ENCODE measurements at regions of chr10 and their contacts with region 1.

Region 1: GRCh38 chr10:6593241-6593671 is 13.2 kb upstream of the PRKCQ start:
- DNase-seq: no peak
- H3K4me3 ChIP-seq: no peak overlapping the region
- H3K27ac ChIP-seq: no peak overlapping the region
- H3K4me1 ChIP-seq: no peaks in the 10 kb centered on the region
- H3K27me3 ChIP-seq: no peaks in the 10 kb centered on the region
- CTCF ChIP-seq: no peak
- EP300 ChIP-seq: no peak
- POLR2A ChIP-seq: no peak

Region 2: GRCh38 chr10:6044751-6045313 is 548.4 kb before region 1 on chr10:
- in situ Hi-C with region 1: no loop called
- intact Hi-C with region 1: loop called (anchors 5 kb)
- DNase-seq: no peak
- H3K4me3 ChIP-seq: no peak overlapping the region
- H3K27ac ChIP-seq: no peak overlapping the region
- H3K4me1 ChIP-seq: no peaks in the 10 kb centered on the region
- H3K27me3 ChIP-seq: no peaks in the 10 kb centered on the region
- CTCF ChIP-seq: no peak
- EP300 ChIP-seq: no peak
- POLR2A ChIP-seq: no peak

Region 3: GRCh38 chr10:6563075-6563474 is 30.2 kb before region 1 on chr10:
- in situ Hi-C with region 1: no loop called
- intact Hi-C with region 1: no loop called
- DNase-seq: no peak
- H3K4me3 ChIP-seq: no peak overlapping the region
- H3K27ac ChIP-seq: no peak overlapping the region
- H3K4me1 ChIP-seq: no peaks in the 10 kb centered on the region
- H3K27me3 ChIP-seq: no peaks in the 10 kb centered on the region
- CTCF ChIP-seq: no peak
- EP300 ChIP-seq: no peak
- POLR2A ChIP-seq: no peak